Tibial artery (tissue), 4 donors: ENCODE measurements at regions of chr15 and their contacts with region 1.

Region 1: GRCh38 chr15:72231066-72231846 is at the start of gene PKM:
- DNase-seq: peak; percentile 95 to 98
- H3K4me3 ChIP-seq: peak within 1 kb of the TSS; percentile 70 to 81
- H3K27ac ChIP-seq: peak within 1 kb of the TSS; percentile 100
- H3K4me1 ChIP-seq: peaks cover 0 to 46% (median 39%) of the 10 kb centered on the region in 4 donors
- H3K27me3 ChIP-seq: no peaks in the 10 kb centered on the region
- CTCF ChIP-seq: no peak

Region 2: DNA sequence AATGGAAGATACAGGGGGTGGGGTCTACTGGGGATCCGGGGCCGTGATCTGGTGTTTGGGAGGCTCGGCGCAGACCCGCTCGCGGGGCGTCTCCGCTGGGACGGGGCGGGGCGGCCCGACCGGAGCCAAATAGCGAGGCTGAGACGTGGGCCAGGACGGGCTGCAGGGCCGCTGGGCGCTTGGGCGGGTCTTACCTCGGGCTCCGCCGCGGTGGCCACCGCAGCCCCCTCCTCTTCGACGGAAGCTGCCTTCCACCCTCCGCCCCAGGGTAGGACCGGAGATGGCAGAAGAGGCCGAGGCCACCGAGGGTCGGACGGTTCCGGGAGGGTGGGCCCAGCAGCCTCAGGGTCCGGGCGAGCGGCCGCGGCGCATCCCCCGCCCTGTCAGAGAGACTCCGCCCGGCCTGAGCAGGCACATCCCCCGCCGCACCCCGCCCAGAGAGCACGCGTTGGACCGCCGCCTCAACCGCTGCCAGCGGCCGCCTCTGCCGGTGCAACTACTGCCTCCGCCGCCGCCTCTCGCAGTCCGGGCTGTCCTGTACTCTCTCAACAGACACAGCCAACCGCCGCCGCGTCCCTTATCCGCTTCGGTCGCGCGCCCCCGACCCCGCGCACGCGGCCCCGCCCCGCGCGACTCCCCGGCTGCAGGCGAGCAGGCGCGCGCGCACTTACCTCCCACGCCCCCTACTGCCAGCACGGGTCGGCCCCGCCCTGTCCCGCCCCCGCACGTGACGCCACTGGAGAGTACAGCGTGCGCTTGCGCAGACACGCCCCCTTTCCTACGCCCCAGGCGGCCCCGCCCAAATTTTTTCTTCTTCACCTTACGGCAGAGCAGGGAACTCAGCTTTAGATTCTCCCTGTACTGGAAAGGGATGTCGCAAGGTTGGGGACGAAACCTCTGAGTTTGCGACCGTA is 113.5 kb before region 1 on chr15 and contains the start of gene MYO9A:
- intact Hi-C with region 1: loop called (anchors 10 kb)
- DNase-seq: peak; percentile 96 to 99
- H3K4me3 ChIP-seq: peak within 1 kb of the TSS; percentile 80 to 89
- H3K27ac ChIP-seq: peak within 1 kb of the TSS; percentile 94 to 97
- H3K4me1 ChIP-seq: peaks cover 0 to 27% (median 16%) of the 10 kb centered on the region in 4 donors
- H3K27me3 ChIP-seq: no peaks in the 10 kb centered on the region
- CTCF ChIP-seq: peak in 1 of 2 experiments; percentile 4